GM10248 (cell line): ENCODE measurements at regions of chr12 and their contacts with region 1.

Region 1: GRCh38 chr12:53321074-53321814 is at the start of gene AAAS:
- DNase-seq: peak; percentile 97
- CTCF ChIP-seq: peak; percentile 98

Region 2: DNA sequence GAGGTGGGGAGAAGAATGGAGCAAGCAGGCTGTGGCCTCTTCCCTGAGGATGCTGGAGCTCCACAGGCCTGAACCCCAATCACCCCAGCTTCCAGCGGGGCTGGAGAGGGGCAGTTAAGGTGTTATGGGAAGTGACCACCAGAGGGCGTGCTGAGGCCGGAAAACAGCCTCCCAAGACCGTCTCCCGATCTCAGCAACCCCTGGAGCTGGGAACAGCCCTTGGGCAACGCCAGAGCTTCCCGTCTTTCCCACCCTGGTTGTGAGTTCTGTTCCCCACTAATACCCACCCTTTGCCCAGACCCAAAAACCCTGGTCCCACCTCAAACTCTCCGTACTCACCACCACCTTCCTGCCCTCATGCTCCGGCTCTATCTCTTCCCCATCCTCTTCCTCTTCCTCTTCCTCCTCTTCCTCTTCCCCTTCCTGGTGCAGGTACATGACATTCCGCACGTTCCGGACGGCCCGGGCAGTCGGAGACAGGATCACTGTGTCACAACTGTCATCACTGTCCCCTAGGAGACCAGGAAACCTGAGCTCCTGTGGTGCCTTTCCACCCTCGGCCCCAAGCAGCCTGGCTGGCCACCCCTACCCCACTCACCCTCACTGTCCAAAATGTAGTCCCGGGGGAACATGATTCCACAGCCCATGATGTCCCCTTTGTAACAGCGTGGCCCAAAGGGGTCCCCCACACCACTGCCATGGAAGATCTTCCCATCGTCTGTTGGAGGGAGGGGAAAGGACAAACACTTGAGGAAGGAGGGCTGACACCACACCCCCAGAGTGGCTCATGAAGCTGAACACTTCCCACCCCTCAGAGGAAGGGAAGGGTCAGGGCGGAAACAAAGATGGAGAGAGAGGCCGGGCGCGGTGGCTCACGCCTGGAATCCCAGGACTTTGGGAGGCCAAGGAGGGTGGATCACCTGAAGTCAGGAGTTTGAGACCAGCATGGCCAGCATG is 255.0 kb before region 1 on chr12:
- CTCF ChIA-PET with region 1: interaction called, 18 read pairs
- POLR2A ChIA-PET with region 1: no interaction called
- DNase-seq: peak; percentile 86
- CTCF ChIP-seq: peak; percentile 90

Region 3: DNA sequence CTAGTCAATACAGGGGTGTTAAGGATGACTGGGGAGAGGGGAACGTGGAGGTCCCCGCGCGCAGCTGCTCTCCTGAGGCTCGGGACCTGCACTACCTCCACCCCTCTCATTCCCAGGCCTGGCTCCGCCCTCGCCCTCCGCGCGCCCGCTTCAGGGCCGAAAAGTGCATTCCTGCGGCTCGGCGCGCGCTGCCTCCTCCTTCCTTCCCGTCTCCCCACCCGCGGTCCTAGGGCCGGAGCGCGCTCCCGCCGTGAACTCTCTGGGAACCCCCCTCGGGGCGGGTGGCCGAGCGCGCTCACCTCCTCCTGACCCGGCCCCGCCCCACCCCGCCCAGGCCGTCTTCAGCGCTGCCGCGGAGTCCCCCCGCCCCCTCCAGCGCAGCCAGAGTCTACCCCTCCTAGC is 100.4 kb before region 1 on chr12:
- CTCF ChIA-PET with region 1: interaction called, 206 read pairs
- POLR2A ChIA-PET with region 1: interaction called, 3 read pairs
- DNase-seq: peak; percentile 94
- CTCF ChIP-seq: no peak

Region 4: DNA sequence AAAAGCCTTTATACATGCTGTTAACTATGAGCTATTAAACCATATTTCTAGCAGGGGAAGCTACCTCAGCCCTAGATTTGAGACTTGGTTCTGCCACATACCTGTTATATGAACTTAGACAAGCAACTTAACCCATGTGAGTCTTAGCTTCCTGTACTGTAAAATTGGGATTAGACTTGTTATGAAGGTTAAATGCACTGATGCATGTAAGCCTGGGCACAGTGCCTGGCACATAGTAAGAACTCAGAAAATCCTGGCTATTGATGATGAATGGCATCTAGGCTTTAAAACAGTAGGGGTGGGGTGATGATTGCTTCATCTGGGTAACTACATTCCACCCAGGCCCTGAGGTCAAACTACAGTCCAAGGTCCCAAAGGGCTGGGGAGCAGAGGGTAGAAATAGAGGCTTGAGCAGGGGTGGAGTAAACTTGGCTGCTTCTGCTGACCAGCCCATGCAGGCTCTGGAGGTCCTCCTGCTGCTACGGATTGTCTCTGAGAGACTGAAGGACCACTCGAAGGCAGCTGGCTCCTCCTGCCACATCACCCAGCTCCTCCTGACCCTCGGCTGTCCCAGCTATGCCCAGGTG is 41.9 kb before region 1 on chr12:
- CTCF ChIA-PET with region 1: interaction called, 13 read pairs
- POLR2A ChIA-PET with region 1: no interaction called
- DNase-seq: no peak
- CTCF ChIP-seq: no peak

Region 5: GRCh38 chr12:53308276-53308675 is 13.0 kb before region 1 on chr12:
- CTCF ChIA-PET with region 1: interaction called, 91 read pairs
- POLR2A ChIA-PET with region 1: interaction called, 3 read pairs
- DNase-seq: no peak
- CTCF ChIP-seq: no peak

Region 6: DNA sequence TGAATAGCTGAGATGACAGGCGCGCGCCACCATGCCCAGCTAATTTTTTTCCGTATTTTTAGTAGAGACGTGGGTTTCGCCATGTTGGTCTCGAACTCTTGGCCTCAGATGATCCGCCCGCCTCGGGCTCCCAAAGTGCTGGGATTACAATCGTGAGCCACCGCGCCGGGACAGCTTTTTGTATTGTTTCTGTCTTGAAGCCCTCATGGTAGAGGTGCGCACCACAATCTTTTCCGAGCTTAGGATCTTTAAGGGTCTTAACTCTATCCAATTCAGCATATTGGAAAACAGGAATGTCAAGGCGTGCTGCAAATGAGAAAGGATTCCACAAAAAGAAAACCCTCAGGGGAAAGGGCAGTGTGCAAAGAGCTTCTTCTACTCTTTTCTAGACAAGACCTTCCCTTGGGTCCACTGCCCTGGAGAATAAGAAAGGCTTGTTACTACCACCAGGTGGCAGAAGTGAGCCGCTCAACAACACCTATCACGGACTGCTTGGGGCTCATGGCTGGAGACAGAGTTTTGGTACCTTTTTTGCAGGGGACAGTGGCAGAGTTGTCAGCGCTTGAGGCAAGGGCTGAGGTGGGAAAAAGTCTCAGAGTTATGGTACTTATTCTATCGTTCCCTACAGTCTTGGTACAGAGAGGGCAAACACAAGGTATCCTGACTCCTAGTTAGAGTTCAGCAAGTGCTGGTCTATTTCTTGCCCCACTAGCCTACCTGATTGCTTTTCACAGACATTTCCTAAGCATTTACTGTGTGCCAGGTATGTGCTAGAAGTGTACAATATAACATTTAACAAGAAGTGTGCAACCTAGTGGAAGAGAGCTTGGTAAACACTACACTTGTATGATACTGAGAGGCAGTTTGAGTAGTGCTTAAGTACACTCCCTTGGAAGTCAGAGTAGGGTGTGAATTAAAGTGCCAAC is 31.4 kb after region 1 on chr12:
- CTCF ChIA-PET with region 1: interaction called, 442 read pairs
- POLR2A ChIA-PET with region 1: no interaction called
- DNase-seq: peak; percentile 79
- CTCF ChIP-seq: peak; percentile 81

Region 7: GRCh38 chr12:53500776-53501614 is 179.8 kb after region 1 on chr12 and contains the start of gene TARBP2:
- CTCF ChIA-PET with region 1: interaction called, 39 read pairs
- POLR2A ChIA-PET with region 1: interaction called, 10 read pairs
- DNase-seq: peak; percentile 96
- CTCF ChIP-seq: no peak

Region 8: GRCh38 chr12:53651737-53652136 is 330.5 kb after region 1 on chr12:
- CTCF ChIA-PET with region 1: no interaction called
- POLR2A ChIA-PET with region 1: no interaction called
- DNase-seq: no peak
- CTCF ChIP-seq: no peak

Region 9: DNA sequence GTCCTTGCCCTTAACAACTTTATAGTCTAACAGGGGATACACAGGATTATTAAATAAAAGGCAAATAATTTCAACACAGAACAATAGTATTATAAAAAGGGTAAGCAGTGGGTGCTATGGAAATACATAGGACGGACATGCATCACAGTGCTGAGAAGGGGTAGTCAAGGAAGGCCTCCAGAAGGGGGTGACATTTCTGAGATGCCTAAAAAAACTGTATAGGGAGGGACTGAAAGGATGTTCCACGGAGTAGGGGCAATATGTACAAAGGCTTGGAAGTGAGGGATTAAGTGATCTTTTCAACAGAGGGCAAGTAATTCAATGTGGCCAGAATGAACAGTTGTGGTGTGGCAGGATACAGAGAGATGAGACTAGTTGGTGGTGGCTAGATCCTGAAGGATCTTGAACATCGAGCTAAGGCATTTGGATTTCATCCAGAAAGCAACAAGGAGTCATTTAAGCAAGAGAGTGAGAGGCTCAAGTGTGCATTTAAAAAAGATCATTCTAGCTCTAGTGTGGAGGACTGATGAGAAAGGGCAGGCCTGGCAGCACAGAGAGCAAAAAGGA is 363.5 kb after region 1 on chr12:
- CTCF ChIA-PET with region 1: no interaction called
- POLR2A ChIA-PET with region 1: no interaction called
- DNase-seq: no peak
- CTCF ChIP-seq: no peak